GM23248 (cell line): ENCODE measurements at regions of chr12 and their contacts with region 1.

Region 1: GRCh38 chr12:113973109-113973904 is 7.2 kb upstream of the RBM19 start:
- DNase-seq: no peak
- H3K4me3 ChIP-seq: no peak overlapping the region
- H3K27ac ChIP-seq: no peak overlapping the region
- H3K4me1 ChIP-seq: no peaks in the 10 kb centered on the region
- H3K27me3 ChIP-seq: peaks cover 41% of the 10 kb centered on the region

Region 2: DNA sequence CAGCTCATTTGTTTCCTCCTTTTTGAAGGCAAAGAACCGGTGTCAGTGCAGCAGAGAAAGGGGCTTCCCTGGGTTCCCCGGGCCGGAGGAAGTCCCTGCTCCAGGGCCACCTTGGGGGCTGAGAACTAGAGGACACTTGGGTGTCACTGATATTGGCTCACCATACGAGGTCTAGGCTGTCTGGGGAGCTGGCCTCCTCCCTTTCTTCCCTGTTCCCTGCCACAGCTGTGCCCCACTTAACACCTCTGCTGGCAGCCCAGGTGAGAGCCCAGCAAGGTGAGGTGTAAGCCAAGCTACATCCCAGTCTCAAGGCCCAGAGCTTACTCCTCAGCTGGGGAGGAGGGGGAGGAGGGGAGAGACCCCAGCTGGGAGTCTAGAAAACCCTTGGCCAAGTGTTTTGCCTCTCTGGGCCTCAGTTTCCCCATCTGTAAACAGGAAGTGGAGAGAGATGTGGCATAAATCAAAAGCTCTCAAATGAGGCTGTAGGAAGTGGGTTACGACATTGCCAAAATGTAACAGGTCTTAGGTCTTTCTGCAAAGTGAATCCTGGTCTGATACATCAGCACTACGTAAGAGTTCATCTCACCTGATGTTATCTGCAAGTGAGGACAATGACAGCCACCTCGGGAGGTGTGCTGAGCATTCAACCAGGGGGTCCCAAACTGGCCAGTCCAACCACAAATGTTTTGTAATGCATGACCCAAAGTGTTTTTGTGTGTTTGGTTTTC is 863.3 kb before region 1 on chr12:
- in situ Hi-C with region 1: no loop called
- DNase-seq: no peak
- H3K4me3 ChIP-seq: no peak overlapping the region
- H3K27ac ChIP-seq: no peak overlapping the region
- H3K4me1 ChIP-seq: no peaks in the 10 kb centered on the region
- H3K27me3 ChIP-seq: no peaks in the 10 kb centered on the region; the same call in none of the 2 replicates

Region 3: DNA sequence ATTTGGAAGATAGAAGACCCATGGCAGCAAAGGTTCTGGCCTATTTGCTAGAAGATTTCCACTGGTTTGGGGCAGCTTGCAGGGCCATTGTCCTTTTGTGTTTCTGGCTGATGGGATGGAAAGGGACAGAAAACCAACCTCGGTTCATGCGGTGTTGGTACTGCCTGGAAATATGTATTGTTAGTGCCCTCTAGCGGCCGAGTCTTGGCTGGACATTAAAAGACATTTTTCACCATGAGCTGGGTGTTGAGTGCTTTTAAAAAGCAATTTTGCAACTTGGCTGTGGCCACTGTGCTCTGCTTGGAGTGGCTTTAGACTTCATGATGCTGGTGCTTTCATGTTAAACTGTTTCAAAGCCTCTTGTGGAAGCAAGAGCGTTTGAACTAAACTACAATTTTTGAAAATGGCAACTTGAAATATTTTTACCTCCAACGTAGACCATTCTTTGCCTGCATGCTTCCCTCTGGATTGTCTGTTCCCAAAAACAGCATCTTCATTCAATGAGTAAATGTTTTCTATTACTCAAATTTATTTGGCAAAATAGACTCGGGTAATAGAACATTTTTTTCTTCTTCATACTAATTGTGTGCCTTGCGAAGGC is 535.3 kb after region 1 on chr12:
- in situ Hi-C with region 1: loop called (anchors 10 kb)
- DNase-seq: peak; percentile 83
- H3K4me3 ChIP-seq: no peak overlapping the region
- H3K27ac ChIP-seq: no peak overlapping the region
- H3K4me1 ChIP-seq: no peaks in the 10 kb centered on the region
- H3K27me3 ChIP-seq: peaks cover 37% of the 10 kb centered on the region